PC-3 (cell line): ENCODE measurements at regions of chr10 and their contacts with region 1.

Region 1: GRCh38 chr10:33335801-33336581 is 1.5 kb upstream of the NRP1 start:
- DNase-seq: peak; percentile 100
- ATAC-seq: peak; percentile 46
- H3K4me3 ChIP-seq: peak overlapping the region; percentile 69
- H3K27ac ChIP-seq: peak overlapping the region; percentile 86
- H3K4me1 ChIP-seq: peaks cover 39% of the 10 kb centered on the region
- H3K27me3 ChIP-seq: no peaks in the 10 kb centered on the region
- CTCF ChIP-seq: 0 out of 2 replicates have a peak, but pooled peaks have one; percentile 24

Region 2: GRCh38 chr10:33352175-33352574 is 16.2 kb after region 1 on chr10:
- CTCF ChIA-PET with region 1: no interaction called
- POLR2A ChIA-PET with region 1: interaction called, 11 read pairs
- intact Hi-C with region 1: loop called (anchors 1 kb)
- DNase-seq: peak; percentile 100
- ATAC-seq: peak; percentile 69
- H3K4me3 ChIP-seq: peak overlapping the region; percentile 48
- H3K27ac ChIP-seq: peak overlapping the region; percentile 63
- H3K4me1 ChIP-seq: peaks cover 82% of the 10 kb centered on the region
- H3K27me3 ChIP-seq: no peaks in the 10 kb centered on the region
- CTCF ChIP-seq: no peak

Region 3: DNA sequence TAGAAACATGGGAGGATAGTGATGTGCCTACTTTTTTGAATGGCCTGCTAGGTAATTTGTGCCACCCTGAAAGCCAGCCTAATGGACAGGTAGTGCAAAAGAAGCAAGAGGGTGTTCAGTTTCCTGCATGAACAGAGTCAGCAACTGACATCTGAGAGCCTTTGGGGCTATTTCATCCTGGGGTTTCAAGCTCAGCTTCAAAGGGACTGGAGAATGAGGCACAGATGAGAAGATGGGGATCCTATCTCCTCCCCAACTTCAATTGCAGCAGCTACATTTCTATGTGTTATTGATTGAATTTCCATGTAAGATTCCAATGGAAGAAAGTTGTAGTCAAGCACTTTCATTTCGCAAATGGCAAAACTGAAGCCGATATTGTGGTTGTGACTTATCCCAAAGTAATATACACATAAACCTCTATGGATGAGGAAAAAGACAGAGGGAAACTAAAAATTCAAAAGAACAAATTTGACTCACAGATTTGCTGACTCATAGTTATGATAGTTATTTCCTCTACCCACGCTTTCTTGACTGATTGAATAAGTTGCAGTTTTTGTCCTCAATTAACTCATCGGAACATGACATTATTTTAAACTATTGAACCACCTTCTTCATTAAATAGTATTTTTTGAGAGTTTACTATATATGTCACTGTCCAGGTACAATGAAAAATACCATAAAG is 41.1 kb after region 1 on chr10:
- CTCF ChIA-PET with region 1: no interaction called
- POLR2A ChIA-PET with region 1: interaction called, 4 read pairs
- intact Hi-C with region 1: loop called (anchors 1 kb)
- DNase-seq: peak; percentile 97
- ATAC-seq: peak; percentile 89
- H3K4me3 ChIP-seq: peak overlapping the region; percentile 49
- H3K27ac ChIP-seq: peak overlapping the region; percentile 75
- H3K4me1 ChIP-seq: peaks cover 23% of the 10 kb centered on the region
- H3K27me3 ChIP-seq: no peaks in the 10 kb centered on the region
- CTCF ChIP-seq: no peak

Region 4: GRCh38 chr10:33460505-33461294 is 124.7 kb after region 1 on chr10:
- CTCF ChIA-PET with region 1: no interaction called
- POLR2A ChIA-PET with region 1: no interaction called
- intact Hi-C with region 1: loop called (anchors 1 kb)
- DNase-seq: peak; percentile 73
- ATAC-seq: peak; percentile 69
- H3K4me3 ChIP-seq: no peak overlapping the region
- H3K27ac ChIP-seq: no peak overlapping the region
- H3K4me1 ChIP-seq: peaks cover 19% of the 10 kb centered on the region
- H3K27me3 ChIP-seq: no peaks in the 10 kb centered on the region
- CTCF ChIP-seq: no peak

Region 5: GRCh38 chr10:33509231-33509831 is 173.3 kb after region 1 on chr10:
- CTCF ChIA-PET with region 1: no interaction called
- POLR2A ChIA-PET with region 1: no interaction called
- intact Hi-C with region 1: loop called (anchors 2 kb)
- DNase-seq: peak; percentile 100
- ATAC-seq: peak; percentile 97
- H3K4me3 ChIP-seq: peak overlapping the region; percentile 41
- H3K27ac ChIP-seq: peak overlapping the region; percentile 65
- H3K4me1 ChIP-seq: peaks cover 28% of the 10 kb centered on the region
- H3K27me3 ChIP-seq: no peaks in the 10 kb centered on the region
- CTCF ChIP-seq: no peak

Region 6: GRCh38 chr10:33653584-33654367 is 317.8 kb after region 1 on chr10:
- CTCF ChIA-PET with region 1: no interaction called
- POLR2A ChIA-PET with region 1: interaction called, 8 read pairs
- intact Hi-C with region 1: loop called (anchors 2 kb)
- DNase-seq: peak; percentile 78
- ATAC-seq: peak; percentile 69
- H3K4me3 ChIP-seq: no peak overlapping the region
- H3K27ac ChIP-seq: peak overlapping the region; percentile 16
- H3K4me1 ChIP-seq: peaks cover 20% of the 10 kb centered on the region
- H3K27me3 ChIP-seq: no peaks in the 10 kb centered on the region
- CTCF ChIP-seq: no peak

Region 7: GRCh38 chr10:33965795-33966575 is 630.0 kb after region 1 on chr10:
- CTCF ChIA-PET with region 1: no interaction called
- POLR2A ChIA-PET with region 1: no interaction called
- intact Hi-C with region 1: loop called (anchors 2 kb)
- DNase-seq: no peak
- ATAC-seq: no peak
- H3K4me3 ChIP-seq: no peak overlapping the region
- H3K27ac ChIP-seq: no peak overlapping the region
- H3K4me1 ChIP-seq: peaks cover 12% of the 10 kb centered on the region
- H3K27me3 ChIP-seq: no peaks in the 10 kb centered on the region
- CTCF ChIP-seq: no peak